PC-9 (cell line): ENCODE measurements at regions of chr19 and their contacts with region 1.

Region 1: GRCh38 chr19:2061495-2062381 is 10.7 kb upstream of the MKNK2 start:
- DNase-seq: peak; percentile 85 to 94
- H3K4me3 ChIP-seq: peak overlapping the region; percentile 73
- H3K27ac ChIP-seq: peak overlapping the region; percentile 100; the same call in 1 of the 2 replicates
- H3K4me1 ChIP-seq: peaks cover 24% of the 10 kb centered on the region
- H3K27me3 ChIP-seq: no peaks in the 10 kb centered on the region
- CTCF ChIP-seq: no peak

Region 2: DNA sequence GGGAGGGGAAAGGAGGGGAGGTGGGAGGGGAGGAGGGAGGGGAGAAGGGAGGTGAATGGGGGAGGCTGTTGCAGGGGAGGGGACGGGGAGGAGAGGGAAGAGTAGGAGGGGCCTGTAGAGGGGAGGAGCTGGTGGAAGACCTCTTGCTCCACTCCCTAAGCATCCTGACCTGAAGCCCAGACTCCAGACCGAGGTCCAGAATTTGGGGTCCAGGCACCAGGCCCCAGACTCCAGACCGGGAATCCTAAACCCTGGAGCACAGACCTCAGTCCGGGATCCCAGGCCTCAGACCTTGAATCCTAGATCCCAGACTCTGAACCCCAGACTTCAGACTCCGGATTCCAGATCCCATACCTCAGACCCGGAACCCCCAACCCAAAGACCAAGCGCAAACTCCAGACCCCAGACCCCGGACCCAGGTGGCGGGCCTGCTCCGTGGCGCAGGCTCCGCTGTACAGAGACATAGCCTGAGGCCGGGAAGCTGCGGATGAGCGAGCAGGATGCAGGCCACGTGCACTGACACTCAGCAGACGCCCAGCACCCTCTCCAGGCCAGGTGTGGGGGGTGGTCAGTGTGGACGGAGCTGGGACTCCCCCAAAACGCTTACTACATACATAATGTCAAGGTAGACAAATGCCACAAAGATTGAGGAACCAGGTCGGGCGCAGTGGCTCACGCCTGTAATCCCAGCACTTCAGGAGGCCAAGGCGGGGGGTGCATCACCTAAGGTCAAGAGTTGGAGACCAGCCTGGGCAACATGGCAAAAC is 45.5 kb before region 1 on chr19:
- CTCF ChIA-PET with region 1: no interaction called
- POLR2A ChIA-PET with region 1: no interaction called
- intact Hi-C with region 1: loop called (anchors 2 kb)
- DNase-seq: peak; percentile 44 to 57
- H3K4me3 ChIP-seq: no peak overlapping the region
- H3K27ac ChIP-seq: no peak overlapping the region
- H3K4me1 ChIP-seq: no peaks in the 10 kb centered on the region; the same call in 1 of the 2 replicates
- H3K27me3 ChIP-seq: no peaks in the 10 kb centered on the region
- CTCF ChIP-seq: no peak

Region 3: DNA sequence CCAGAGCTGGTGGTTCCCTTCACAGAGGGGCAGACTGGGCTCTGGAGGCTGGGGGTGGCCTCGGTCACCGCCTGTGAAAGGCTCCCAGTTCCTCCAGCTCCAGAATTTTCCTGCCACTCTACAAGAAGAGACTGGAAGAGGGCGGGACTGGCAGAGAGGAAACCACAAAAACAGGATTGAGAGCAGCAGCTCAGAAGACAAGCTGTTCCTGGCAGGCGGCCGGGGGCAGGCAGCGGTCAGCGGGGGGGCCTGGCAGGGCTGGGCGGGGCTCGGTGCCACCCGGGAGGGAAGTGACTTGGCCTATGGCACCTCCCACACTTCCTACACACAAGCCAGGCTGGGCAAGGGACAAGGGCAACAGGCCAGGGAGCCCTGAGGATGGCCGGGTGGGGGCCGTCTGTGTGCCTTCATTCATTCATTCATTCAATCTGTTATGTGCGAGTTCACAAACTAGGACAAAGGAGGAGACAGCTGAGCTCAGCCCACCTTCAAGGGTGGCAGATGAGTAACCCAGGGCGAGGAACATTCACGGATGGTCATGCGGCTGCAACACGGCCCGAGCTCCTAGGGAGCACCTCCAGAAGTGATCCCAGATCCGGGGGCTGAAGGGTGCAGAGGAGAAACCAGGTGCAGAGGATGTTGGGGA is 29.3 kb before region 1 on chr19:
- CTCF ChIA-PET with region 1: interaction called, 4 read pairs
- POLR2A ChIA-PET with region 1: interaction called, 3 read pairs
- intact Hi-C with region 1: loop called (anchors 2 kb)
- DNase-seq: peak; percentile 85 to 94
- H3K4me3 ChIP-seq: peak overlapping the region; percentile 40; the same call in 1 of the 2 replicates
- H3K27ac ChIP-seq: peak overlapping the region; percentile 78
- H3K4me1 ChIP-seq: peaks cover 25% of the 10 kb centered on the region
- H3K27me3 ChIP-seq: no peaks in the 10 kb centered on the region
- CTCF ChIP-seq: no peak

Region 4: GRCh38 chr19:2151339-2152229 is 89.8 kb after region 1 on chr19 and contains the start of gene AP3D1:
- CTCF ChIA-PET with region 1: no interaction called
- POLR2A ChIA-PET with region 1: no interaction called
- intact Hi-C with region 1: no loop called
- DNase-seq: peak; percentile 93 to 98
- H3K4me3 ChIP-seq: peak within 1 kb of the TSS; percentile 83
- H3K27ac ChIP-seq: peak within 1 kb of the TSS; percentile 68
- H3K4me1 ChIP-seq: peaks cover 43% of the 10 kb centered on the region
- H3K27me3 ChIP-seq: no peaks in the 10 kb centered on the region
- CTCF ChIP-seq: no peak
- total RNA-seq, gene AP3D1: 75.5 and 87.2 TPM in 2 replicates

Region 5: DNA sequence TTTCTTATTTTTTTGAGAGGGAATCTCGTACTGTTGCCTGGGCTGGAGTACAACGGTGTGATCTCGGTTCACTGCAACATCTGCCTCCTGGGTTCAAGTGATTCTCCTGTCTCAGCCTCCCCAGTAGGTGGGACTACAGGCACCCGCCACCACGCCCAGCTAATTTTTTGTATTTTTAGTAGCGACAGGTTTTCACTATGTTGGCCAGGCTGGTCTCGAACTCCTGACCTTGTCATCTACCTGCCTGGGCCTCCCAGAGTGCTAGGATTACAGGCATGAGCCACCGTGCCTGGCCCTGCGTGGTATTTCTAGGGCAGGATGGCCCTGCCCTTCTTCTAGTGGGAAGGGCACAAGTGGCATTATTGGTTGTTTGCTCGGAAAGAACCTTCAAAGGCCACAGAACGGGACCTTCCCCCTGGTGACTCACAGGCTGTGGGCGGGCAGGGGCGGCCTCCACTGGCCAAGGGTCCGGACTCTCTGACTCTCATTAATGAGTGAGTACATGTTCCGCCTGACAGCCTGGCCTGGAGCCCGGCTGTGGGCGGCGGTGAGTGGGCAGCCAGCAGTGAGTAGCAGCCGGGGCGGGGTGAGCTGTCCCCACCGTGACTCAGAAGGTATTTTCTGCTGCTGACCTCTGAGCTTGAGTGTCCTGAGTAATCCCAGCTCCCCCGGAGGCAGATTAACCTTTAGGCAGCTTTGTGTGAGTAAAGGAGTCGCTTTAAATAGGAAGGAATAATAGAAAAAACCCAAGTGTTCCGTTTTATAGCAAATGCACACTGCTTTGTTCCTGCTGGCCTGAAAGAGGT is 107.1 kb after region 1 on chr19:
- CTCF ChIA-PET with region 1: no interaction called
- POLR2A ChIA-PET with region 1: no interaction called
- intact Hi-C with region 1: no loop called
- DNase-seq: peak; percentile 95 to 96
- H3K4me3 ChIP-seq: 0 out of 2 replicates have a peak overlapping the region, but pooled peaks have one; percentile 31
- H3K27ac ChIP-seq: peak overlapping the region; percentile 64
- H3K4me1 ChIP-seq: peaks cover 24% of the 10 kb centered on the region
- H3K27me3 ChIP-seq: no peaks in the 10 kb centered on the region
- CTCF ChIP-seq: no peak